Natural killer cell (primary cell): ENCODE measurements at regions of chr20 and their contacts with region 1.

Region 1: DNA sequence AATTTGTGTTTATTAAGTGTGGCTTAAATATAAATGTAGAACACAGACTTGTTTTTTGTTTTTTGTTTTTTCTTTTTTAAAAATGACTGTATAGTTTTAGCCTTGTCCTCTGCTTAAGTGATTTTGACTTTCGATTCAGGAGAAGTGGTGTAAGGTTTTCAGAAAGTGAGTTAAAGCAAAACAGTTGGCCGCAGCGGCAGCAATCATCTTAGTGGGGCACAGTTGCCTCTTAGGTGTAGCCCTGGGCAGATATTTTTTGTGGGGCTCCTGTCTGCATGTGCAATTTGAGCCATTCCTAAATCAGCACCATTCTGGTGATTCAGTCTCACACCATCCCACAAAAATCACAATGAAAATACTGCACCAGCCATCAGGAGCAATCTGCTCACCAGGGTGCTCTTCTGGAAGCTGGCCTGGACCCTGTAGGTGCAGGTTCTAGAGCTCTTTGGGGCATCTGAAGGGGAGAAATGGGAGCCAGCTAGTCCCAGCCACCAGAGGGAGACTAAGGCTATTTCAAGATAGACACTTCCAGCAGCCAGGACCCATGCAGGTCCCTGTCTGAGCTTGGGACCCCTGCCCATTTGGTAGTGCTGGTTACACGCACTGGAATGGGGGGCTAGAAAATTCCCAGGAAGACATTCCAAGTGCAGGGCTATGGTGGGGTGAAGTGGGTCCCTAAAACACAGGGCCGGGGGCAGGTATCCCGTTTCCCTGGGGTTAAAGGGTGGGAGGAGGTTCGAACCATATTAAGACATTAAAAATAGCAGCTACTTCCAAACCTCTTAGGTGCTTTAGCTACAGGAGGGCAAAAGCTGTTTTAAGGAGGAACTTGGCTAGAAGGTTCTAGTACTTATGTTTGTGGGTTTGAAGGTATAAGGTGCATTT is 156.6 kb downstream of the NFATC2 start:
- DNase-seq: peak in 1 of 2 donors; percentile 69
- ATAC-seq: peak in 2 of 3 donors; percentile 32 to 45
- H3K4me3 ChIP-seq: no peak overlapping the region
- H3K4me3 Mint-ChIP-seq: peak overlapping the region; percentile 25
- H3K27ac ChIP-seq: peak overlapping the region; percentile 26
- H3K27ac Mint-ChIP-seq: peak overlapping the region; percentile 80 to 86
- H3K4me1 ChIP-seq: peaks cover 48% of the 10 kb centered on the region
- H3K4me1 Mint-ChIP-seq: peaks cover 74 to 76% of the 10 kb centered on the region in 2 donors
- H3K27me3 ChIP-seq: no peaks in the 10 kb centered on the region
- H3K27me3 Mint-ChIP-seq: no peaks in the 10 kb centered on the region
- CTCF ChIP-seq: peak; percentile 53

Region 2: GRCh38 chr20:51326201-51326819 is 59.6 kb before region 1 on chr20:
- intact Hi-C with region 1: no loop called
- DNase-seq: peak; percentile 25 to 75
- ATAC-seq: no peak
- H3K4me3 ChIP-seq: no peak overlapping the region
- H3K4me3 Mint-ChIP-seq: no peak overlapping the region
- H3K27ac ChIP-seq: no peak overlapping the region
- H3K27ac Mint-ChIP-seq: no peak overlapping the region
- H3K4me1 ChIP-seq: no peaks in the 10 kb centered on the region
- H3K4me1 Mint-ChIP-seq: no peaks in the 10 kb centered on the region
- H3K27me3 ChIP-seq: no peaks in the 10 kb centered on the region
- H3K27me3 Mint-ChIP-seq: peaks cover 0 to 13% of the 10 kb centered on the region in 2 donors
- CTCF ChIP-seq: peak; percentile 48

Region 3: GRCh38 chr20:51398083-51398482 is 12.2 kb after region 1 on chr20:
- intact Hi-C with region 1: loop called (anchors 1 kb)
- DNase-seq: no peak
- ATAC-seq: no peak
- H3K4me3 ChIP-seq: no peak overlapping the region
- H3K4me3 Mint-ChIP-seq: no peak overlapping the region
- H3K27ac ChIP-seq: no peak overlapping the region
- H3K27ac Mint-ChIP-seq: peak overlapping the region; percentile 95 to 100
- H3K4me1 ChIP-seq: peaks cover 54% of the 10 kb centered on the region
- H3K4me1 Mint-ChIP-seq: peaks cover 71 to 76% of the 10 kb centered on the region in 2 donors
- H3K27me3 ChIP-seq: no peaks in the 10 kb centered on the region
- H3K27me3 Mint-ChIP-seq: no peaks in the 10 kb centered on the region
- CTCF ChIP-seq: no peak

Region 4: GRCh38 chr20:51417250-51418136 is 31.6 kb after region 1 on chr20:
- intact Hi-C with region 1: loop called (anchors 1 kb)
- DNase-seq: peak; percentile 55 to 74
- ATAC-seq: peak; percentile 60 to 61 (median 60)
- H3K4me3 ChIP-seq: no peak overlapping the region
- H3K4me3 Mint-ChIP-seq: peak overlapping the region; percentile 85
- H3K27ac ChIP-seq: peak overlapping the region; percentile 79
- H3K27ac Mint-ChIP-seq: peak overlapping the region; percentile 94 to 95
- H3K4me1 ChIP-seq: peaks cover 63% of the 10 kb centered on the region
- H3K4me1 Mint-ChIP-seq: peaks cover 69 to 76% of the 10 kb centered on the region in 2 donors
- H3K27me3 ChIP-seq: no peaks in the 10 kb centered on the region
- H3K27me3 Mint-ChIP-seq: no peaks in the 10 kb centered on the region
- CTCF ChIP-seq: no peak

Region 5: GRCh38 chr20:51500311-51500710 is 114.4 kb after region 1 on chr20:
- intact Hi-C with region 1: no loop called
- DNase-seq: peak; percentile 49 to 86
- ATAC-seq: peak; percentile 79 to 90 (median 83)
- H3K4me3 ChIP-seq: no peak overlapping the region
- H3K4me3 Mint-ChIP-seq: peak overlapping the region; percentile 88
- H3K27ac ChIP-seq: peak overlapping the region; percentile 87
- H3K27ac Mint-ChIP-seq: peak overlapping the region; percentile 95 to 99
- H3K4me1 ChIP-seq: peaks cover 82% of the 10 kb centered on the region
- H3K4me1 Mint-ChIP-seq: peaks cover 92 to 93% of the 10 kb centered on the region in 2 donors
- H3K27me3 ChIP-seq: no peaks in the 10 kb centered on the region
- H3K27me3 Mint-ChIP-seq: no peaks in the 10 kb centered on the region
- CTCF ChIP-seq: no peak

Region 6: GRCh38 chr20:51595058-51595532 is 209.2 kb after region 1 on chr20:
- intact Hi-C with region 1: loop called (anchors 1 kb)
- DNase-seq: peak; percentile 62 to 87
- ATAC-seq: peak; percentile 87 to 99 (median 99)
- H3K4me3 ChIP-seq: no peak overlapping the region
- H3K4me3 Mint-ChIP-seq: peak overlapping the region; percentile 65
- H3K27ac ChIP-seq: no peak overlapping the region
- H3K27ac Mint-ChIP-seq: peak overlapping the region; percentile 45 to 69
- H3K4me1 ChIP-seq: peaks cover 7% of the 10 kb centered on the region
- H3K4me1 Mint-ChIP-seq: peaks cover 9 to 21% of the 10 kb centered on the region in 2 donors
- H3K27me3 ChIP-seq: no peaks in the 10 kb centered on the region
- H3K27me3 Mint-ChIP-seq: no peaks in the 10 kb centered on the region
- CTCF ChIP-seq: peak; percentile 88